Ascending aorta (tissue), 2 donors: ENCODE measurements at regions of chr7 and their contacts with region 1.

Region 1: GRCh38 chr7:43582503-43583423 is at the start of gene STK17A:
- DNase-seq: peak; percentile 74 to 96
- H3K4me3 ChIP-seq: peak within 1 kb of the TSS; percentile 83 to 89
- H3K27ac ChIP-seq: peak within 1 kb of the TSS; percentile 92 to 98
- H3K4me1 ChIP-seq: peaks cover 0 to 10% of the 10 kb centered on the region in 2 donors
- H3K27me3 ChIP-seq: no peaks in the 10 kb centered on the region
- CTCF ChIP-seq: peak; percentile 100
- total RNA-seq, gene STK17A: 9.6 TPM

Region 2: GRCh38 chr7:43552122-43552521 is 30.6 kb before region 1 on chr7:
- intact Hi-C with region 1: no loop called
- DNase-seq: no peak
- H3K4me3 ChIP-seq: no peak overlapping the region
- H3K27ac ChIP-seq: no peak overlapping the region
- H3K4me1 ChIP-seq: no peaks in the 10 kb centered on the region
- H3K27me3 ChIP-seq: no peaks in the 10 kb centered on the region
- CTCF ChIP-seq: no peak

Region 3: DNA sequence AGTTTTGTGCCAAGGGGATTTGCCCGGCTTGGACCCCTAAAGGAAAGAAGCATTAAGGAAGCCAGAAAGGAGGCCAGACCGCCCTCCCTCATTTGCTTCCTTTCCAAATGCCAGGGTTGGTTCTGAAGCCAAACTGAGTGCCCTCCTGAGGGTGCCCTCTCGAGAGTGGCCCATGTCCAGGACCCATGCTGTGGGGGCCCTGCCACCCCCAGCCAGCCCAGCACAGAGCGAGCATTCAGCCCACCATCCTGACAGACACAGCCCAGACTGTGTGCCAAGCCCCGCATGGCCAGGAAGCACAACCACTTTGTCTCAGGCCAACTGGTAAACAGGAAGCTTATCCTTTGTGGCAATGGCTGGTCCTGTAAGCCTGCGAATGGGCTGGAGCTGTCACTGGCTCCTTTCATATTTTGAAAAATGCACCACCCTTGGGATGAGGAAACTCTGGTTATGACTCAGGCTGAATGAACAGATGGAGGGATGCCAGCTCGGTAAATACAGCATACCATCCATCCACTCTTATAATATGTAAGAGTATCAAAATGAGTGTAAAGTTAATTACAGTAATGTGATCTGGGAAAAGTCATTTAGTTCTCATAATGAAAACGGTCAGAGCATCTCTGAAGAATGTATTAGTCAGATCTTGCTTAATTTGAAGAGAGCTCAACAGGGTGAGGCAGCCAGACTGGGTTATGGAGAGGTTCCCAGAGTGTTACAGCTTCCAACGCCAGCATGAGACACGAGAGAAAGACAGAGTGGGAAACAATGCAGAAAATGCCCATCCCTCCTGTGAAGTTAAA is 65.1 kb after region 1 on chr7:
- intact Hi-C with region 1: loop called (anchors 1 kb)
- DNase-seq: peak in 1 of 2 donors; percentile 93
- H3K4me3 ChIP-seq: peak overlapping the region; percentile 43 to 60
- H3K27ac ChIP-seq: peak overlapping the region; percentile 94 to 96
- H3K4me1 ChIP-seq: peaks cover 42 to 70% of the 10 kb centered on the region in 2 donors
- H3K27me3 ChIP-seq: no peaks in the 10 kb centered on the region
- CTCF ChIP-seq: no peak

Region 4: DNA sequence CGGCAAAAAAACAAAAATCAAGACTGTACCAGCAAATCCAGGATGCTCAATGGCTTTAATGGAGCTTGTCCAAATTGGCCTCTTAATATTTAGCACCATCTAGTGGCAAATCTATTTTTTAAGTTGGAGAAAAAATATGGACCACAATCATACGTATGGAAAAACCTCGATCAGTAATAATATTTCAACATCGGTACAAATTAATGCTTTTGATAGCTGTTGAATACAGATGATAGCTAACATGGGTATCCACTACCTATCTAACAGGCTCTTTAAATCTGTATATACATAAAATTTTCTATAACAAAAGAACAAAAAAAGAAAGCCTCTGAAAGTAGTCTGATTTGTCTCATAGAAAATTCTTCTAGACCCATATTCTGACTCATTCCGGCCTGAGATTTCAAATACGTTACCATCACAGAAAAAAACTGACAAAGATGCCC is 117.3 kb after region 1 on chr7:
- intact Hi-C with region 1: loop called (anchors 1 kb)
- DNase-seq: no peak
- H3K4me3 ChIP-seq: peak overlapping the region in 1 of 2 donors; percentile 39
- H3K27ac ChIP-seq: no peak overlapping the region
- H3K4me1 ChIP-seq: no peaks in the 10 kb centered on the region
- H3K27me3 ChIP-seq: no peaks in the 10 kb centered on the region
- CTCF ChIP-seq: peak; percentile 56 to 75 (median 60)

Region 5: DNA sequence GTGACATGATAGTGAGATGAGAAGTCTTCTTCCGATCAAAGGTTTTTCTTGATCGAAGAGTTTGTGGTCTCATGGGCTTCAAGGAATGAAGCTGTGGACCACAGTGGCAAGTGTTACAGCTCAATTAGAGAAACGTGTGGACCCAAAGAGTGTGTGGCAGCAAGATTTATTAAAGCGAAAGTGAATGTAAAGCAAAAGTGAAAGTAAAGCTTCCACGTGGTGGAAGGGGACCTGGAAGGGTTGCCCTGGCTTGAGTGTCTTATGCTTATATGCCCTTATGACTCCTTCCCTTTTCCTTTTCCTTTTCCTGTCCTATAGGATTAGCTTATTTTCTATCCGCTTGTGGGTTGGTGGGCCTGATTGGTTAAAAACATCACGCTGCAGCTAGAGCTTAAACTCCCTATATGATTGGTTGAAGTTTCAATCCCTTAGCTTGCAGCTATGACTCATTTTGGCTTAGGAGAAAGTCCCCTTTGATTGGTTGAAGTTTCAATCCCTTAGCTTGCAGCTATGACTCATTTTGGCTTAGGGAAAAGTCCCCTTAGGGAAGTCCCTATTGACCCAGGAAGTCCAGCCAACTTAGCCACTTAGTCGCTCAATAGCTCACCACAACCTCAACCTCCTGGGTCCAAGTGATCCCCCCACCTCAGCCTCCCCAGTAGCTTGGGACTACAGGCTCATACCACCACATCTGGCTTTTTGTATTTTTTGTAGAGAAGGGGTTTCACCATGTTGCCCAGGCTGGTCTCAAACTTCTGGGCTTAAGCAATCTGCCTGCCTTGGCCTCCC is 251.9 kb after region 1 on chr7:
- intact Hi-C with region 1: loop called (anchors 2 kb)
- DNase-seq: no peak
- H3K4me3 ChIP-seq: peak overlapping the region in 1 of 2 donors; percentile 3
- H3K27ac ChIP-seq: no peak overlapping the region
- H3K4me1 ChIP-seq: peaks cover 0 to 3% of the 10 kb centered on the region in 2 donors
- H3K27me3 ChIP-seq: no peaks in the 10 kb centered on the region
- CTCF ChIP-seq: no peak